GM12878 (cell line): ENCODE measurements at regions of chr12 and their contacts with region 1.

Region 1: DNA sequence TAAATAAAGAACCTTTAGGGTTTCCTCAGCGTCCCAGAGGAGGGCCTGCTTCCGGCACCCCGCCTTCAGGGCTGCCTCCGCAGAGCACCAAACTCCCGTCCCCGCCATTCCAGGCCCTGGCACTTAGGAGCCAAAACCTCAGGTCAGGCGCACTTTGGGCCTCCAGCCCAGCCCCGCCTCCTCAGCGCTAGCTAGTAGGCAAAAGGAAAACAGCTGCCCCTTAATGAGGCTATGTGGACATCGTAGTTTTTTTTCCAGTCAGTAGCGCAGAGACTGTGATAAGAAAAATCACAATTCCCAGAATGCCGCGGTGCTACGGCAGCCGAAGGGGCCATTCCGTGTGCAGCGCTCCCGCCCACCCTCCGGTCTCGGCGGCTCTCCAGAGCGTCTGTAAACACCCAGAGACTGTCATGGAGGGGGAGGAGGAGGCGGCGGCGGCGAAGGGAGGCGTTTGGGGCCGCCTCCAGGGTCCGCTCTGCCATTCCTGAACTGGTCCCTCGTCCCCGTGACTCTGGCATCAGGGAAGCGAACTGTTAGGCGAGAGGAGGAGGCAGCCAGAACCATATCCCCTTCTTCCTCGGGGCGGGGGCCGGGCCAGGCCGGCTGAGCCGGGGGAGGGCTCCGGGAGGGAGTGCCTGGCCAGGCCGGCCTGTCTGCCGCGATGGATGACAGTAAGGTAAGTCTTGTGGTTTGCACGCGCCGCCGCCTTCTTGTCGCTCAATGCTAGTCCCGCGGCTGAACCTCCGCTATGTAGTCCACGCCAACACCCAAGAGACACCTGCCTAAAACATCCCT is at the start of gene CREBL2:
- DNase-seq: peak; percentile 80
- ATAC-seq: peak; percentile 82
- H3K4me3 ChIP-seq: peak within 1 kb of the TSS; percentile 86
- H3K27ac ChIP-seq: peak within 1 kb of the TSS; percentile 94
- H3K4me1 ChIP-seq: peaks cover 17% of the 10 kb centered on the region
- H3K27me3 ChIP-seq: no peaks in the 10 kb centered on the region
- CTCF ChIP-seq: no peak
- EP300 ChIP-seq: no peak
- POLR2A ChIP-seq: peak; percentile 92
- RAD21 ChIP-seq: no peak
- polyA plus RNA-seq, gene CREBL2: 4.6 to 5.2 TPM

Region 2: DNA sequence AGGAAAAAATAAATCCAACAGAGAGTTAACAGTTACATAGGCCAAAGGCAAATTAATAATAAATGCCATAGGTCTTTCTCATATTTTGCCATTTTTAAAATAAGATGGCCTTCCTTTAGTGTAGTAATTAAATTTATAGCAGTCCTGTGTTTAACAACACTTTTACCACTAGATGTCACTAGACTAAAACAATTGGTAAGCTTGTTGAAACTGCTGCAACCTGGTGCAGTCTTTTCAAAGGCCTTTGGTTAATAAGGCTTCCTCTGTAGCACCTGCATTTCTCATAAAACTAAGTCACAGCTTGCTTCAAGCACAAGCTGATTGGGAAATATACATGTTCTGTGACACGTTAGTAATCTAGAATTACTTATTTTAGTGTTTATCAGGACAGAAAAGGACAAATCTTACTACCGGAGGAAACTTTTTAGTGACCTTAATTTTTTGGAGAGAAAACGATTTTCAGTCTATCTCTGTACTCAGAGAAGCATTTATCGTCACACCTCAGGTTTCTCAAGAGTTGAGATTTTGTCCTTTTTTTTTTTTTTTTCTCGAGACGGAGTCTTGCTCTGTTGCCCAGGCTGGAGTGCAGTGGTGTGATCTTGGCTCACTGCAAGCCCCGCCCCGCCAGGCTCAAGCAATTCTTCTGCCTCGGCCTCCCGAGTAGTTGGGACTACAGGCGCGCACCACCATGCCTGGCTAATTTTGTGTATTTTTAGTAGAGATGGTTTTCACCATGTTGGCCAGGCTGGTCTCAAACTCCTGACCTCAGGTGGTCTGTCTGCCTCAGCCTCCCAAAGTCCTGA is 234.9 kb before region 1 on chr12:
- CTCF ChIA-PET with region 1: interaction called, 70 read pairs
- POLR2A ChIA-PET with region 1: interaction called, 4 read pairs
- RAD21 ChIA-PET with region 1: interaction called, 103 read pairs
- SMC1A ChIA-PET with region 1: interaction called, 102 read pairs
- in situ Hi-C with region 1: no loop called
- intact Hi-C with region 1: loop called (anchors 1 kb)
- DNase-seq: peak; percentile 55
- ATAC-seq: peak; percentile 76
- H3K4me3 ChIP-seq: no peak overlapping the region
- H3K27ac ChIP-seq: no peak overlapping the region; the same call in 1 of the 2 replicates
- H3K4me1 ChIP-seq: peaks cover 6% of the 10 kb centered on the region
- H3K27me3 ChIP-seq: no peaks in the 10 kb centered on the region
- CTCF ChIP-seq: peak; percentile 41 to 81 (median 58); a peak in 5 of 6 replicates
- EP300 ChIP-seq: no peak
- POLR2A ChIP-seq: no peak
- RAD21 ChIP-seq: peak; percentile 98

Region 3: GRCh38 chr12:12467688-12468261 is 143.9 kb before region 1 on chr12:
- CTCF ChIA-PET with region 1: no interaction called
- POLR2A ChIA-PET with region 1: no interaction called
- RAD21 ChIA-PET with region 1: no interaction called
- SMC1A ChIA-PET with region 1: no interaction called
- in situ Hi-C with region 1: no loop called
- intact Hi-C with region 1: no loop called
- DNase-seq: no peak
- ATAC-seq: no peak
- H3K4me3 ChIP-seq: no peak overlapping the region
- H3K27ac ChIP-seq: no peak overlapping the region
- H3K4me1 ChIP-seq: no peaks in the 10 kb centered on the region
- H3K27me3 ChIP-seq: no peaks in the 10 kb centered on the region
- CTCF ChIP-seq: no peak
- EP300 ChIP-seq: no peak
- POLR2A ChIP-seq: no peak
- RAD21 ChIP-seq: no peak

Region 4: DNA sequence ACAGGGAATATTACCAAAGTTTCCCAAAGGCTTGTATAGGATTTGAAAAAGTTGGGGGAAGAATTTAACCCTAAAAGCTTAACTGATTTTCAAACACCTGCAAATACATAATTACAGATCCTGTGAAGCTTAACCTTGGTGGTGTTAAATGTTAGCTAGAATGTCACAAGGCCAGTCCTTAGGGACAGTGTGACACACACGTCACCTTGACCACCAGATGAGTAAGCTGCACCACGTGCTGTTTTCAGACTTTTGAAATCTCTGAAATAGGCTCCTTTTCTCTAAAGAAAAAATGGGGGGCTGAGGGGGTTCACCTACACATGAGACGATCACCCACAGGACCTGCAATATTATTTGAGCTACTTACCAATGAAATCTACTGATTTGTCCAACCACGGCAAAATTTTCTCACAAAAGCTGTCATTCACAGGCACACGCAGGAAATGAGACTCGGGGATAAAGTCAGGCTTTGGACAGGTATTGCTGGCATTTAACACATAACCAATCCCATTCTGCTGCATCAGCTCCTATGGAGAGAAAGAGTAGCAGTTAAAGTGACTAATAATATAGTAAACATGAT is 125.0 kb before region 1 on chr12:
- CTCF ChIA-PET with region 1: interaction called, 10 read pairs
- POLR2A ChIA-PET with region 1: interaction called, 3 read pairs
- RAD21 ChIA-PET with region 1: interaction called, 10 read pairs
- SMC1A ChIA-PET with region 1: interaction called, 11 read pairs
- in situ Hi-C with region 1: no loop called
- intact Hi-C with region 1: no loop called
- DNase-seq: peak; percentile 57
- ATAC-seq: peak; percentile 93
- H3K4me3 ChIP-seq: no peak overlapping the region
- H3K27ac ChIP-seq: peak overlapping the region; percentile 58
- H3K4me1 ChIP-seq: peaks cover 19% of the 10 kb centered on the region
- H3K27me3 ChIP-seq: no peaks in the 10 kb centered on the region
- CTCF ChIP-seq: no peak
- EP300 ChIP-seq: peak; percentile 96 to 98
- POLR2A ChIP-seq: no peak
- RAD21 ChIP-seq: no peak

Region 5: GRCh38 chr12:12555656-12556055 is 56.1 kb before region 1 on chr12:
- CTCF ChIA-PET with region 1: interaction called, 16 read pairs
- POLR2A ChIA-PET with region 1: interaction called, 4 read pairs
- RAD21 ChIA-PET with region 1: interaction called, 32 read pairs
- SMC1A ChIA-PET with region 1: interaction called, 8 read pairs
- in situ Hi-C with region 1: no loop called
- intact Hi-C with region 1: loop called (anchors 2 kb)
- DNase-seq: no peak
- ATAC-seq: no peak
- H3K4me3 ChIP-seq: no peak overlapping the region
- H3K27ac ChIP-seq: no peak overlapping the region
- H3K4me1 ChIP-seq: peaks cover 16% of the 10 kb centered on the region
- H3K27me3 ChIP-seq: no peaks in the 10 kb centered on the region
- CTCF ChIP-seq: no peak
- EP300 ChIP-seq: no peak
- POLR2A ChIP-seq: no peak
- RAD21 ChIP-seq: no peak

Region 6: DNA sequence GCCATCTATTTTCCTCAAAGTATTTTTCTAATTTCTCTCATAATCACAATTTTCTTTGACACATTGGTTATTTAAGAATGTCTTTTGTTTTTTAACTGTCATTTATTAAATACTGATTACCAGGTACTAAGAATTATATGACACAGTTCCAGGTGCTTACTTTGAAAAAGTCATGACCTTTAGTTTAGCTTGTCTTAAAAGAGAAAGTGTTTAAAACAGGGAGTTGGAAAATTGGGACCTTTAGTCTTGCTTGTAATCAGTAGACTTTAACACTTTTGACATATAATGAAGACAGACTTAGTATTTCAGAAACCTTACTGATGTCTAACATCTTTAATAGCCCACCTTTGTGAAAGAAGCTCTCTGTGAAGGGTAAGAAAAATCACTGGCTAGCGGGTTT is 19.1 kb after region 1 on chr12:
- CTCF ChIA-PET with region 1: interaction called, 31 read pairs
- POLR2A ChIA-PET with region 1: interaction called, 4 read pairs
- RAD21 ChIA-PET with region 1: interaction called, 4 read pairs
- SMC1A ChIA-PET with region 1: interaction called, 28 read pairs
- in situ Hi-C with region 1: no loop called
- intact Hi-C with region 1: no loop called
- DNase-seq: no peak
- ATAC-seq: no peak
- H3K4me3 ChIP-seq: no peak overlapping the region
- H3K27ac ChIP-seq: no peak overlapping the region
- H3K4me1 ChIP-seq: no peaks in the 10 kb centered on the region
- H3K27me3 ChIP-seq: no peaks in the 10 kb centered on the region
- CTCF ChIP-seq: no peak
- EP300 ChIP-seq: no peak
- POLR2A ChIP-seq: no peak
- RAD21 ChIP-seq: no peak

Region 7: GRCh38 chr12:12696562-12697383 is 85.1 kb after region 1 on chr12:
- CTCF ChIA-PET with region 1: no interaction called
- POLR2A ChIA-PET with region 1: interaction called, 5 read pairs
- RAD21 ChIA-PET with region 1: interaction called, 3 read pairs
- SMC1A ChIA-PET with region 1: no interaction called
- in situ Hi-C with region 1: no loop called
- intact Hi-C with region 1: loop called (anchors 2 kb)
- DNase-seq: peak; percentile 91
- ATAC-seq: peak; percentile 78
- H3K4me3 ChIP-seq: peak overlapping the region; percentile 77
- H3K27ac ChIP-seq: peak overlapping the region; percentile 99
- H3K4me1 ChIP-seq: peaks cover 35% of the 10 kb centered on the region
- H3K27me3 ChIP-seq: no peaks in the 10 kb centered on the region
- CTCF ChIP-seq: no peak
- EP300 ChIP-seq: peak; percentile 39 to 63; a peak in 2 of 4 replicates
- POLR2A ChIP-seq: peak; percentile 72
- RAD21 ChIP-seq: no peak

Region 8: DNA sequence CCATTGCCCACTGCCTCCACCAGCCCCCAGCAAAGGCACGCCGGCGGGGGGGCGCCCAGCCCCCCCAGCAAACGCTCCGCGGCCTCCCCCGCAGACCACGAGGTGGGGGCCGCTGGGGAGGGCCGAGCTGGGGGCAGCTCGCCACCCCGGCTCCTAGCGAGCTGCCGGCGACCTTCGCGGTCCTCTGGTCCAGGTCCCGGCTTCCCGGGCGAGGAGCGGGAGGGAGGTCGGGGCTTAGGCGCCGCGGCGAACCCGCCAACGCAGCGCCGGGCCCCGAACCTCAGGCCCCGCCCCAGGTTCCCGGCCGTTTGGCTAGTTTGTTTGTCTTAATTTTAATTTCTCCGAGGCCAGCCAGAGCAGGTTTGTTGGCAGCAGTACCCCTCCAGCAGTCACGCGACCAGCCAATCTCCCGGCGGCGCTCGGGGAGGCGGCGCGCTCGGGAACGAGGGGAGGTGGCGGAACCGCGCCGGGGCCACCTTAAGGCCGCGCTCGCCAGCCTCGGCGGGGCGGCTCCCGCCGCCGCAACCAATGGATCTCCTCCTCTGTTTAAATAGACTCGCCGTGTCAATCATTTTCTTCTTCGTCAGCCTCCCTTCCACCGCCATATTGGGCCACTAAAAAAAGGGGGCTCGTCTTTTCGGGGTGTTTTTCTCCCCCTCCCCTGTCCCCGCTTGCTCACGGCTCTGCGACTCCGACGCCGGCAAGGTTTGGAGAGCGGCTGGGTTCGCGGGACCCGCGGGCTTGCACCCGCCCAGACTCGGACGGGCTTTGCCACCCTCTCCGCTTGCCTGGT is 105.3 kb after region 1 on chr12 and contains the start of gene CDKN1B:
- CTCF ChIA-PET with region 1: interaction called, 6 read pairs
- POLR2A ChIA-PET with region 1: interaction called, 6 read pairs
- RAD21 ChIA-PET with region 1: interaction called, 3 read pairs
- SMC1A ChIA-PET with region 1: interaction called, 7 read pairs
- in situ Hi-C with region 1: no loop called
- intact Hi-C with region 1: loop called (anchors 5 kb)
- DNase-seq: peak; percentile 58
- ATAC-seq: peak; percentile 74
- H3K4me3 ChIP-seq: peak within 1 kb of the TSS; percentile 97
- H3K27ac ChIP-seq: peak within 1 kb of the TSS; percentile 97
- H3K4me1 ChIP-seq: peaks cover 20% of the 10 kb centered on the region
- H3K27me3 ChIP-seq: no peaks in the 10 kb centered on the region
- CTCF ChIP-seq: no peak
- EP300 ChIP-seq: no peak
- POLR2A ChIP-seq: peak; percentile 75
- RAD21 ChIP-seq: no peak
- polyA plus RNA-seq, gene CDKN1B: 4.2 to 8.0 TPM